ENCODE measurements at regions of chr6 and their contacts with region 1.

Region 1: DNA sequence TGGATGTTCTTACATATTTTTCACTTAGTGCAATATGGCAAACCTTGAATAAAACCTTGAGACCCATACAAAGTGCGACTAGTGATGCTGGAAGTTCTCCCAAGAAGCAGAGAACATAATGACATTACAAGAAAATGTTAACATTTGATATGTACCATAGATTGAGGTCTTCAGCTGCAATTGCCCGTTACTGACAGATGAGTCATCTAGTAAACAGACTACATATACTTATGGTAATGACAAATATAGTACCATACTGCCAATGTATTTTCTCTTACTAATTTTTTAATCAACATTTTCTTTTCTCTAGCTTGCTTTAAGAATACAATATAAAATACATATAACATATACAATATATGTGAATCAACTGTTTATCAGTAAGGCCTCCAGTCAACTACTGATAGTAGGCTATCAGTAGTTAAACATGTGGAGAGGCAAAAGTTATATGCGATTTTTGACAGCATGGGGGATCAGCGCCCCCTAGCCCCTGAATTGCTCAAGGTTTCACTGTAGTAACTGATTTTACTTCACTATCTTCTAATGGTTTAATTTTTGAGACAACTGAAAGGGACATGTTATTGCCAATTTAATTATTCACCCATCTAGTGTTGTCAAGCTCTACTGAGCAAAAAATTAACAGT is 166.7 kb upstream of the ADGRB3 start:
- DNase-seq: no peak
- ATAC-seq: no peak
- H3K4me3 ChIP-seq: no peak overlapping the region
- H3K27ac ChIP-seq: no peak overlapping the region
- H3K4me1 ChIP-seq: no peaks in the 10 kb centered on the region
- H3K27me3 ChIP-seq: no peaks in the 10 kb centered on the region
- CTCF ChIP-seq: peak; percentile 41; the same call in 1 of the 2 replicates
- EP300 ChIP-seq: no peak
- POLR2A ChIP-seq: no peak
- RAD21 ChIP-seq: no peak

Region 2: GRCh38 chr6:68343901-68344300 is 124.5 kb before region 1 on chr6:
- CTCF ChIA-PET with region 1: no interaction called
- POLR2A ChIA-PET with region 1: no interaction called
- in situ Hi-C with region 1: no loop called
- intact Hi-C with region 1: loop called (anchors 2 kb)
- DNase-seq: peak; percentile 26
- ATAC-seq: peak; percentile 81
- H3K4me3 ChIP-seq: no peak overlapping the region
- H3K27ac ChIP-seq: no peak overlapping the region
- H3K4me1 ChIP-seq: no peaks in the 10 kb centered on the region
- H3K27me3 ChIP-seq: no peaks in the 10 kb centered on the region
- CTCF ChIP-seq: peak; percentile 37
- EP300 ChIP-seq: no peak
- POLR2A ChIP-seq: no peak
- RAD21 ChIP-seq: no peak

Region 3: GRCh38 chr6:68651011-68651985 is 182.9 kb after region 1 on chr6:
- CTCF ChIA-PET with region 1: no interaction called
- POLR2A ChIA-PET with region 1: no interaction called
- in situ Hi-C with region 1: no loop called
- intact Hi-C with region 1: no loop called
- DNase-seq: no peak
- ATAC-seq: no peak
- H3K4me3 ChIP-seq: no peak overlapping the region
- H3K27ac ChIP-seq: no peak overlapping the region
- H3K4me1 ChIP-seq: no peaks in the 10 kb centered on the region
- H3K27me3 ChIP-seq: no peaks in the 10 kb centered on the region
- CTCF ChIP-seq: no peak
- EP300 ChIP-seq: no peak
- POLR2A ChIP-seq: no peak
- RAD21 ChIP-seq: no peak